AG04450 (cell line): ENCODE measurements at regions of chr1 and their contacts with region 1.

Region 1: GRCh38 chr1:92298573-92299476 is at the starts of genes GLMN and RPAP2:
- DNase-seq: peak; percentile 46
- H3K4me3 ChIP-seq: peak within 1 kb of the TSS; percentile 83
- H3K27ac ChIP-seq: peak within 1 kb of the TSS; percentile 85
- H3K27me3 ChIP-seq: no peaks in the 10 kb centered on the region
- CTCF ChIP-seq: peak; percentile 13; the same call in 1 of the 2 replicates
- polyA plus RNA-seq, gene GLMN: 6.0 and 10.1 TPM in 2 replicates
- polyA plus RNA-seq, gene RPAP2: 13.6 and 21.5 TPM in 2 replicates

Region 2: GRCh38 chr1:91997607-91998195 is 301.1 kb before region 1 on chr1:
- CTCF ChIA-PET with region 1: interaction called, 236 read pairs
- POLR2A ChIA-PET with region 1: no interaction called
- DNase-seq: peak; percentile 30
- H3K4me3 ChIP-seq: no peak overlapping the region
- H3K27ac ChIP-seq: no peak overlapping the region
- H3K27me3 ChIP-seq: no peaks in the 10 kb centered on the region
- CTCF ChIP-seq: peak; percentile 68

Region 3: DNA sequence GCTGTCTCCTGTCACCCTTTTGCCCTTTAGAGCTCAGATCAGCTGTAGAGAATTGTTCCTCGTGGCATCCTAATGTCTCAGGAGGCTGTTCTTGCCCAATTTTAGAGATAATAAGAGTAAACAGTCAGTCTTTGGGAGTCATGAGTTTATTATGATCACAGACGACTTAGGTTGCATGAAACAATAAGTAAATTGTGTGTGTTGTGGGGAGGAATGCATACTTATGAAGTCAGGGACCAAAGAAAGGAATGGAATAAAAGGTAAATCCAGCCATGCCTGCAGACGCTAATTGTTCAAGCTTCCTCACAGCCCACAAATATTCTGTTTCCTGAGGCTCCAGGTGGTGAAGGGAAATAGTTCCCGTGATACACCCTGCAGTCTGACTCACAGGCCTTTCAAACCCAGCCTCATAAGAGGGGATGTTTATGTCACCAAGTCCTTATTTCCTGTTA is 268.1 kb before region 1 on chr1:
- CTCF ChIA-PET with region 1: interaction called, 10 read pairs
- POLR2A ChIA-PET with region 1: no interaction called
- DNase-seq: no peak
- H3K4me3 ChIP-seq: peak overlapping the region; percentile 65
- H3K27ac ChIP-seq: peak overlapping the region; percentile 39
- H3K27me3 ChIP-seq: no peaks in the 10 kb centered on the region
- CTCF ChIP-seq: no peak

Region 4: DNA sequence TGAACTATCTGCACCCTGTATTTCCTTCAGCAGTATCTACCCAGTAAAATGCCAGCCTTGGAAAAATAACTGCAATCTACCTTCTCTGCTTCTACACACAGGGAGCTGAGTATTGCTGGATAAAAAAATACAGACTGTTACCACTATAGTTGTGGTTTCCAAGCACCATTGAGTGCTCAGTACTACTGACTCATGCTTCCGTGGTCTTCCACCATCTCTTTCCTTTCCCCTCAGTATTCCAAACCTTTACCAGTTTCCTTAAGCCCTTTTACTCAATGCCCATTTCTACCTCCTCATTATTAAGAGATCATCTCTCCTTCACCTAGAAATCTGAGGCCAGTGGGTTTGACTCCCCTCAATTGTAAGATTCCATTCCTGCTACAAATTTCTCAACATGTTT is 23.9 kb before region 1 on chr1:
- CTCF ChIA-PET with region 1: no interaction called
- POLR2A ChIA-PET with region 1: no interaction called
- DNase-seq: no peak
- H3K4me3 ChIP-seq: no peak overlapping the region
- H3K27ac ChIP-seq: no peak overlapping the region
- H3K27me3 ChIP-seq: no peaks in the 10 kb centered on the region
- CTCF ChIP-seq: no peak